AG04450 (cell line): ENCODE measurements at regions of chr3 and their contacts with region 1.

Region 1: GRCh38 chr3:40456940-40457823 is at the start of gene RPL14:
- DNase-seq: peak; percentile 89
- H3K4me3 ChIP-seq: peak within 1 kb of the TSS; percentile 99
- H3K27ac ChIP-seq: peak within 1 kb of the TSS; percentile 65
- H3K27me3 ChIP-seq: no peaks in the 10 kb centered on the region
- CTCF ChIP-seq: no peak
- polyA plus RNA-seq, gene RPL14: 602 and 612 TPM in 2 replicates

Region 2: GRCh38 chr3:40445062-40445461 is 12.1 kb before region 1 on chr3:
- CTCF ChIA-PET with region 1: no interaction called
- POLR2A ChIA-PET with region 1: no interaction called
- DNase-seq: no peak
- H3K4me3 ChIP-seq: no peak overlapping the region
- H3K27ac ChIP-seq: no peak overlapping the region
- H3K27me3 ChIP-seq: no peaks in the 10 kb centered on the region
- CTCF ChIP-seq: no peak

Region 3: GRCh38 chr3:40524568-40525285 is 67.5 kb after region 1 on chr3 and contains the start of gene ZNF621:
- CTCF ChIA-PET with region 1: interaction called, 4 read pairs
- POLR2A ChIA-PET with region 1: interaction called, 19 read pairs
- DNase-seq: peak; percentile 50
- H3K4me3 ChIP-seq: peak within 1 kb of the TSS; percentile 77
- H3K27ac ChIP-seq: peak within 1 kb of the TSS; percentile 80
- H3K27me3 ChIP-seq: no peaks in the 10 kb centered on the region
- CTCF ChIP-seq: no peak
- polyA plus RNA-seq, gene ZNF621: 20.4 and 24.9 TPM in 2 replicates